GM13977 (cell line): ENCODE measurements at regions of chr2 and their contacts with region 1.

Region 1: GRCh38 chr2:32534831-32535230 is 93.0 kb upstream of the TTC27 start:
- DNase-seq: no peak
- CTCF ChIP-seq: no peak

Region 2: GRCh38 chr2:32095671-32096070 is 439.2 kb before region 1 on chr2:
- in situ Hi-C with region 1: no loop called
- DNase-seq: no peak
- CTCF ChIP-seq: no peak

Region 3: DNA sequence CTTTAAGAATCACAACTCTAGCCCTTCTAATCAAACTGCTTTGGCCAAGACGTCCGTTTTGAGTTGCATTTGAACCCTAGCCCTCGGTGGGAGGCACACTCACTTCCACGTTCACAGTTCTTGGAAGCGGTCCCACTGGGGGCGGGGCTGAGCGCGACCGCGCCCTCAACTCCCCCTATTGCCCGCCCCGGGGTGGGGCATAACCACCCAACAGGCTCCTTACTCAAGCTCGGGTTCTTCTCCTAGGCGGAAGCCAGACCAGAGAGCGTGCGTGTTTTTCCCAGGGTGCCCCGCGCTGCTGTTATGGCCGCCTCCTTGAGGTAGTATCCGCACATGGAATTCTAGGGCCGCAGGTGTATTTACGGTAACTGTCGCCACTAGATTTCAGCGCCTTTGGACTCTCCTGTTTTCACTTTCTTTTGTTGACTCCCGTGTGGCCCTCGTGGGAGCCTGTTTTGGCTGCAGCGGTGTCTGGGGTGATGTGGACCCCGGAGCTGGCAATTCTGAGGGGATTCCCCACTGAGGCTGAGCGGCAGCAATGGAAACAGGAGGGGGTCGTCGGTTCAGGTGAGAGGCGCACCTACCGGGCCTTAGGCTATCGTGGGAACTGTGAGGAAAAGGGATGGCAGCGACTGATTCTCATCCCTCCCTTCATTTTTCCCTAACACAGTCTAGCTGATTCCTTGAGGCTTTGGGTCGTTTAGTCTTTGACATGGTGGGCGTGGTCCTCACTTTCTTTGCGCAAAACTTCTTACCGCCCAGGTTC is 93.2 kb after region 1 on chr2 and contains the start of gene TTC27:
- in situ Hi-C with region 1: loop called (anchors 25 kb)
- DNase-seq: peak; percentile 94
- CTCF ChIP-seq: no peak